ENCODE measurements at regions of chr5 and their contacts with region 1.

Region 1: GRCh38 chr5:132820162-132820754 is 7.2 kb downstream of the SOWAHA start:
- DNase-seq: peak; percentile 96
- ATAC-seq: peak; percentile 86
- H3K4me3 Mint-ChIP-seq: no peak overlapping the region
- H3K27ac Mint-ChIP-seq: no peak overlapping the region
- H3K4me1 Mint-ChIP-seq: peaks cover 12% of the 10 kb centered on the region
- H3K27me3 Mint-ChIP-seq: peaks cover 30% of the 10 kb centered on the region

Region 2: GRCh38 chr5:132500931-132501630 is 319.2 kb before region 1 on chr5:
- CTCF ChIA-PET with region 1: interaction called, 9 read pairs
- POLR2A ChIA-PET with region 1: interaction called, 5 read pairs
- intact Hi-C with region 1: loop called (anchors 1 to 5 kb)
- DNase-seq: peak; percentile 85
- ATAC-seq: peak; percentile 34
- H3K4me3 Mint-ChIP-seq: no peak overlapping the region
- H3K27ac Mint-ChIP-seq: no peak overlapping the region
- H3K4me1 Mint-ChIP-seq: peaks cover 22% of the 10 kb centered on the region
- H3K27me3 Mint-ChIP-seq: no peaks in the 10 kb centered on the region

Region 3: GRCh38 chr5:132526290-132526973 is 293.8 kb before region 1 on chr5:
- CTCF ChIA-PET with region 1: interaction called, 38 read pairs
- POLR2A ChIA-PET with region 1: no interaction called
- intact Hi-C with region 1: loop called (anchors 1 kb)
- DNase-seq: peak; percentile 60
- ATAC-seq: peak; percentile 34
- H3K4me3 Mint-ChIP-seq: no peak overlapping the region
- H3K27ac Mint-ChIP-seq: no peak overlapping the region
- H3K4me1 Mint-ChIP-seq: peaks cover 39% of the 10 kb centered on the region
- H3K27me3 Mint-ChIP-seq: peaks cover 3% of the 10 kb centered on the region

Region 4: DNA sequence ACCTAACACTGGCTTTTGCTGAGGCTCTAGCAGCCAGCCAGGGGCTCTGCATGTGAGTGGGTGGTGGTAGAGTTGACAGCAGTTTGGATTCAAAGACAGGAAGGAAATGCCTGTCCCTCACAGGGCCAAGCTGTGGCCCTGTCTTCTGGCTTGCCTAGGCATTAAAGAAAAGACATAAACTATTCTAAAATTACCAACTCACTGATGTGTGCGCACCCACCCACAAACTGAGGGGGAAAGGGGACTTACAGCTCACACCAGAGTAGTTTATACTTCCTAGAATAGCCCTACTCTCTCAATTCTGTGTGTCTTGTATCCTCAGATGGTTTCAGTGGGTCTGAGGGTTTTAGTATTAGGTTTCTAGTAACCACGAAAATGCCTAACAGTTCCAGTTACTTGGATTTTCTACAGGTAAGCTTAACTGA is 180.5 kb before region 1 on chr5:
- CTCF ChIA-PET with region 1: no interaction called
- POLR2A ChIA-PET with region 1: no interaction called
- intact Hi-C with region 1: loop called in 1 of 2 experiments (anchors 5 kb)
- DNase-seq: peak; percentile 44
- ATAC-seq: peak; percentile 3
- H3K4me3 Mint-ChIP-seq: no peak overlapping the region
- H3K27ac Mint-ChIP-seq: no peak overlapping the region
- H3K4me1 Mint-ChIP-seq: peaks cover 71% of the 10 kb centered on the region
- H3K27me3 Mint-ChIP-seq: no peaks in the 10 kb centered on the region

Region 5: DNA sequence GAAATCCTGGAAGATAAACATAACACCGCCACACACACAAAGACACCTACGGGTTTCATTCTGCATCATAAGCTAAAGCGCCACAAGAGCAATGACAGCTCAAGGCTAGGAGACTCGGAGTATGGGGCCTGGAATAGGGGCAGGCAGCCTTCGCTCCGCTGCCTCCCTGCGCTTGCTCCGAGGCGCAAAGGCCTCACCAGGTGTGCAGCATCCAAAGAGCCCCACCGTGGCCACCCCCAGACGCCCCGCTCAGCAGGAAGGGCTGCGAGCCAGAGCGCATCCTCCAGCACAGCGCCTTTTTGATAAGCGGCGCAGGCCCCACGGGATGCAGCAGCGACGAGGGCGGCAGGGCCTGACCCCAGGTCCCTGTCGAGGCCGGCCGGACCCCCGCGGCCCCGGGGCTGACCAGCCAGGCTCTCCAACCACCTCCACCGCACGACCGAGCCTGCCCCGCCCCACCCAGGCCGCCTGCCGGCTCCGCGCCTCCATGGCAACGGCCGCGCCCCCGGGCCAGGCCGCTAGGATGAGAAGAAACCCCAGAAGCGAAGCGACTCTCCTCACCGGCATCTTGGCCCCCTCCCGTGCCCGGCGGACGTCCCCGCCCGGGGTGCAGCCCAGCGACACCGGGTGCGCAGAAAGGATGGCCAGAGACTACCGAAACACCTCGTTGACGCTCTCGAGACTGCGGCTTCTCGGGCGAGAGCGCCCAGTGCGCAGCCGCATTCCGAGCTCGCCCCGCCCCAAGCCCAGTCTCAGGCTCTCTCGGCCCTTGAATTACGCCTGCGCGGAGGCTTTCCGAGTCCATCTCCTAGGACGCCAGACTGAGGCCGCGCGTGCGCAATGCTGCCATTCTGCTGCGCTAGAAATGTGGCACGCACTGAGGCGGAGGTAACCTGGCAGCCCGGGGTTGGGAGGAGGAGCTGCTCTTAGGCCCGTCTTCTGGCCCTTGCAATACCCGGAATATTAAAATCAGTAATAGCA is 83.1 kb before region 1 on chr5 and contains the start of gene KIF3A:
- CTCF ChIA-PET with region 1: interaction called, 4 read pairs
- POLR2A ChIA-PET with region 1: no interaction called
- intact Hi-C with region 1: loop called in 1 of 2 experiments (anchors 5 kb)
- DNase-seq: peak; percentile 99
- ATAC-seq: peak; percentile 94
- H3K4me3 Mint-ChIP-seq: peak within 1 kb of the TSS; percentile 77
- H3K27ac Mint-ChIP-seq: peak within 1 kb of the TSS; percentile 70
- H3K4me1 Mint-ChIP-seq: peaks cover 30% of the 10 kb centered on the region
- H3K27me3 Mint-ChIP-seq: no peaks in the 10 kb centered on the region
- total RNA-seq, gene KIF3A: 7.1 to 10.6 TPM

Region 6: GRCh38 chr5:132753135-132753987 is 66.9 kb before region 1 on chr5:
- CTCF ChIA-PET with region 1: interaction called, 10 read pairs
- POLR2A ChIA-PET with region 1: no interaction called
- intact Hi-C with region 1: no loop called
- DNase-seq: peak; percentile 49
- ATAC-seq: peak; percentile 47
- H3K4me3 Mint-ChIP-seq: no peak overlapping the region
- H3K27ac Mint-ChIP-seq: peak overlapping the region; percentile 7
- H3K4me1 Mint-ChIP-seq: peaks cover 28% of the 10 kb centered on the region
- H3K27me3 Mint-ChIP-seq: no peaks in the 10 kb centered on the region

Region 7: GRCh38 chr5:132807163-132807838 is 13.0 kb before region 1 on chr5:
- CTCF ChIA-PET with region 1: interaction called, 14 read pairs
- POLR2A ChIA-PET with region 1: no interaction called
- intact Hi-C with region 1: no loop called
- DNase-seq: no peak
- ATAC-seq: no peak
- H3K4me3 Mint-ChIP-seq: no peak overlapping the region
- H3K27ac Mint-ChIP-seq: no peak overlapping the region
- H3K4me1 Mint-ChIP-seq: no peaks in the 10 kb centered on the region
- H3K27me3 Mint-ChIP-seq: peaks cover 58% of the 10 kb centered on the region